Lower lobe of right lung (tissue), 2 donors: ENCODE measurements at regions of chr7 and their contacts with region 1.

Region 1: DNA sequence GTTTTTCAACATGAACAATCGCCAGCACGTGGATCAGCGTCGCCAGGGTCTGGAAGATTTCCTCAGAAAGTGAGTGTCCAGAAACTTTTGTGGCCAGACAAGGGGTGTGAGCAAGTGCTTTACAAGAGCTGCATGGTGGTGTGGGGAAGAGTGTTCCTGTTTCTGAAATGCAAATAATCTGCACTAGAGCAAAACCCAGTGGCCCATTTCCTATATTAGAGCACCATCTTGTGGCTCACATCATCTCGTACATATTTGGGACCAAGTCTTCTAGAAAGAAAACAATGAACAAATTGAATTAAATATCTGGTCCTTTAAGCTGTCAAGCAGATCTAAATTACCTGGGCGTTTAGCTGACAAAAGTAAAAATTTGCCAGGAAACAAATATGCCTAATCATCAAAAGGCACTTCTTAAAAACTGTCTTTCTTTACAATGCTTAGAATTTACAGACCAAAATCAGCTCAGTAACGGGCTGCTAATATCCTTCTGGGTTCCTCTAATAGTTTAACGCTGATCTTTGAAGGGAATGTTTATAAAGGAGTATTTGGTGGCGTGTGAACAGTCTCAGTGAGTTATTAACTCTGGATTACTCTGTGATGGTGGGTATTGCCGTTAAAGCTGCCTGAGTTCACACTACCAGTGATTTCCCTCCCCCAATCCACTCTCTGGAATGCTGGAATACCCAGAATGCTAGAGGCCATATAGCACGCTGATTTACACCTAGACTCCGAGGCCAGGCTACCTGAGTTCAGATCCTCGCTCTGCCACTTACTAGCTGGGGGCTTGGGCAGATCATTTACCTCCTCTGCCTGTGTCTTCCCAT is 73.6 kb downstream of the SNX10 start:
- DNase-seq: peak; percentile 51
- ATAC-seq: peak; percentile 83 to 89
- H3K4me3 ChIP-seq: no peak overlapping the region
- H3K27ac ChIP-seq: no peak overlapping the region
- H3K4me1 ChIP-seq: peaks cover 14% of the 10 kb centered on the region
- H3K27me3 ChIP-seq: no peaks in the 10 kb centered on the region
- CTCF ChIP-seq: peak; percentile 80

Region 2: DNA sequence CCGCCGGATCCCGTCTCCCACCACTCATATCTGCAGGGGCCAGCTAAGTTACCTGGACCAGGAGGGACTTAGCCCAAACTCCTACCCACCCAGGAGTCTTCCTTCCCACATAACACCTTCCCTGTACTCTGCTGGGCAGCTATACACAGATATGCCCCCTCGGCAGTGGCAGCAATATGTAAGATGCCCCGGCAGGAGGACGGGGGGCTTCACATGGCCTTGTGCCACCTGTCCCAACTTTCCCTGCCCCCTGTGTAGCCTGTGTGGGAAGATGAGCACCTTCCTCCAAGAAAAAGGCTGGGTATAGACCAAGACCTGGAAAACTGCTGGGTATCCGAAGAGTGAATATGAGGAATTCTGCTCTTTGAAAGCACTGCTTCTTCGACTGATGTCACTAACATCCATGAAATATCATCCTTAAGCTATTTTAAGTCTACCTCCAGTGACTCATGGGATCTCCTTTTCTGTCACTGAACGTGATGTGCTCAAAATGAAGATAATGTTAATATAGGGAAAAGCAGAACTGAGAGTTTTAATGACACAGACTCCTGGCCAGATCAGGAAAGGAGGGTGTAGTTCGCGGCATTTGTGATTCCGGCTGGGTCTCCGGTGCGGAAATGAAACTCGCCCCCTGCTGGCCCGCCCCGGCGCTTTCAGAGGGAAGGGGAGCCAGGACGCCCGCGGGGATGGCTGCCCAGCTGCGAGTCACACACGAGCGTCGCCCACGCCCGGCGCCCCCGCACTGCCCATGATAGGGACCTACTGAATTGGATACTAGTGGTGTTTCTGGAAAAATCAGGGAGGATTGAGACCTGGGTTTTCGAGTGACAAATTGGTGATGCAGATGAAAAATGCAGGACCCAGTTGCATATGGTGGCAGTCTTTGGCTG is 470.1 kb before region 1 on chr7:
- intact Hi-C with region 1: loop called (anchors 5 kb)
- DNase-seq: peak; percentile 81
- ATAC-seq: peak; percentile 85
- H3K4me3 ChIP-seq: peak overlapping the region; percentile 23
- H3K27ac ChIP-seq: no peak overlapping the region
- H3K4me1 ChIP-seq: peaks cover 11% of the 10 kb centered on the region
- H3K27me3 ChIP-seq: peaks cover 2% of the 10 kb centered on the region
- CTCF ChIP-seq: peak; percentile 75

Region 3: GRCh38 chr7:26087321-26088091 is 277.8 kb before region 1 on chr7:
- intact Hi-C with region 1: loop called (anchors 5 kb)
- DNase-seq: no peak
- ATAC-seq: no peak
- H3K4me3 ChIP-seq: no peak overlapping the region
- H3K27ac ChIP-seq: no peak overlapping the region
- H3K4me1 ChIP-seq: peaks cover 5% of the 10 kb centered on the region
- H3K27me3 ChIP-seq: no peaks in the 10 kb centered on the region
- CTCF ChIP-seq: no peak

Region 4: DNA sequence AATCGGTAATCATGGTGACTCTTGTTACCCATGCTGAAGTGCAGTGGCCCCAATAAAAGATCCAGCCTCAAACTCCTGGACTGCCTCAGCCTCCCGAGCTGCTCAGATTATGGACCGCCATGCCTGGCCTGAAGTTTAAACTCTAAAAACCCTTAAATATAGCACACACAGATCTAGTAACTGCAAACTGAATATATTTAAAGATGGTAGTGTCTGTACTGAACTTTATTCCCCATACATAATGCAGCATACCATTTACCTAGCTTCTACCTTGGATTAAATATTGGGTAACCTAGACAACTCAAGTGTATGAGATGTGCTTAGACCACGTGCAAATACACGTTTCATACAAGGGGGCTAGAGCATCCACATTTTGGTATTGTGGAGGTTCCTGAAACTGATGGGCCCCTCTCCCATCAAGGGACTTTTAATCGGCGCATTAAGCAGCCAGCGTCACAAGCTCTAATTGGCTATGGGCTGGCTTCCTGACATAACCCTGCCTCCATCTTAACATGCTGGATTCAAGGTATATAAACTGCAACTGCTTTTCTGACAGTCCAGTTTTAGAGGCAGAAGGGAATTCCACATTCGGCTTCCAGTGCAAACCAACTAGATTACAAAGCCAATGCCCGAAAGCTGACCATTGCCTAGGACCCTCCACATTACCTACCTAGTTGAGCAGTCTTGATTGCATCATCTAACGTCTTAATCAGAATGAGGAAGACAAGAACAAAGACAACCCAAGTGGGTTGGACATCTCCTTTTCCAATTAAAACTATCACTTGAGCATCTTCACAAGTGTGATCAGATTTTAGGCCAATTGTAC is 177.7 kb before region 1 on chr7:
- intact Hi-C with region 1: no loop called
- DNase-seq: no peak
- ATAC-seq: peak in 1 of 2 donors; percentile 17
- H3K4me3 ChIP-seq: no peak overlapping the region
- H3K27ac ChIP-seq: no peak overlapping the region
- H3K4me1 ChIP-seq: peaks cover 36% of the 10 kb centered on the region
- H3K27me3 ChIP-seq: no peaks in the 10 kb centered on the region
- CTCF ChIP-seq: no peak